CD4-positive, alpha-beta memory T cell (primary cell): ENCODE measurements at regions of chr6 and their contacts with region 1.

Region 1: DNA sequence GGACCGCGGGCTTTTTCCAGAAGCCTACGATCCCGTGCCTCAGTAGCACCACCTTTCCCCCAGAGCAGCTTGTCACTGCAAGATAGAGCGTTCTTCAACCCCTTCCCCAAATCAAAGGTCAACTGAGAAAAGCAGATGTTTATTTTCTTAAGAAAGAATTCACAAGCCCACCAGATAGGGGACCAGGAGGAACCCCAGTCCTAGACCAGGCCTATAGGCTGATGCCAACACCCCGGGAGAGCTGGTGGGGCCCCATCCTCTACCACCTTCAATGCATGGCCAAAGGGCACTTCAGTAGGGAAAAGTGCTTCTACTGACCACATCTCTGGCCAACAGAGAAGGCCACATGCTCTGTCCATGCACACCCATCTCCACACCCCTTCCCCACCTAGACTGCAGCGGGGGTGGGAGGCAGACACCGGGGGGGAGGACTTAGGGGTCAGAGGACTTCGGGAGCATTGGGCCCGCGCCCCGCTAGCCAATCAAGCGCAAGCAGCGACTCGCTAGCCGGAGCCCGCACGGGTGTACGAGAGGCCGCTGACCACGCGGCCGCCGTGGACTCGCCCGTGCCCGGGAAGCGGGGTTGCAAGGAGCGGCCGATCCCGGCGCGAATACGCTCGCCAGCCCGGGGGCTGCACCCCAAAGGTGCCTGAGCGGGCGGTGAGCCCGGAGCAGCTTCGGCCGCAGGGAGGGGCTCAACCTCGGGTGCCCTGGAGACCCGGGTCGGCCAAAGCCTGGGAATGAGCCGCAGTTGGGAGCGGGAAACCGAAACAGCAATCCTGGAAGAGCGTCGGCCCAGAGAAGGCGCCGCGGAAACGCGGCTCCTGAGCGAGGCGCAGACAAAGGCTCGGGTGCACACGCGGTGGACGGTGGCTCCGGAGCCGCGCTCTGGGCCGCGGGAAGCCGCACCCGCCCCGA is 2.8 kb downstream of the PDE10A start:
- DNase-seq: no peak
- H3K4me3 ChIP-seq: no peak overlapping the region
- H3K4me3 Mint-ChIP-seq: peak overlapping the region in 5 of 8 donors; percentile 36 to 70 (median 50)
- H3K27ac ChIP-seq: no peak overlapping the region
- H3K27ac Mint-ChIP-seq: no peak overlapping the region
- H3K4me1 ChIP-seq: no peaks in the 10 kb centered on the region
- H3K4me1 Mint-ChIP-seq: peaks cover 5 to 11% (median 9%) of the 10 kb centered on the region in 4 donors
- H3K27me3 ChIP-seq: peaks cover 2% of the 10 kb centered on the region
- H3K27me3 Mint-ChIP-seq: peaks cover 25 to 33% of the 10 kb centered on the region in 2 donors

Region 2: DNA sequence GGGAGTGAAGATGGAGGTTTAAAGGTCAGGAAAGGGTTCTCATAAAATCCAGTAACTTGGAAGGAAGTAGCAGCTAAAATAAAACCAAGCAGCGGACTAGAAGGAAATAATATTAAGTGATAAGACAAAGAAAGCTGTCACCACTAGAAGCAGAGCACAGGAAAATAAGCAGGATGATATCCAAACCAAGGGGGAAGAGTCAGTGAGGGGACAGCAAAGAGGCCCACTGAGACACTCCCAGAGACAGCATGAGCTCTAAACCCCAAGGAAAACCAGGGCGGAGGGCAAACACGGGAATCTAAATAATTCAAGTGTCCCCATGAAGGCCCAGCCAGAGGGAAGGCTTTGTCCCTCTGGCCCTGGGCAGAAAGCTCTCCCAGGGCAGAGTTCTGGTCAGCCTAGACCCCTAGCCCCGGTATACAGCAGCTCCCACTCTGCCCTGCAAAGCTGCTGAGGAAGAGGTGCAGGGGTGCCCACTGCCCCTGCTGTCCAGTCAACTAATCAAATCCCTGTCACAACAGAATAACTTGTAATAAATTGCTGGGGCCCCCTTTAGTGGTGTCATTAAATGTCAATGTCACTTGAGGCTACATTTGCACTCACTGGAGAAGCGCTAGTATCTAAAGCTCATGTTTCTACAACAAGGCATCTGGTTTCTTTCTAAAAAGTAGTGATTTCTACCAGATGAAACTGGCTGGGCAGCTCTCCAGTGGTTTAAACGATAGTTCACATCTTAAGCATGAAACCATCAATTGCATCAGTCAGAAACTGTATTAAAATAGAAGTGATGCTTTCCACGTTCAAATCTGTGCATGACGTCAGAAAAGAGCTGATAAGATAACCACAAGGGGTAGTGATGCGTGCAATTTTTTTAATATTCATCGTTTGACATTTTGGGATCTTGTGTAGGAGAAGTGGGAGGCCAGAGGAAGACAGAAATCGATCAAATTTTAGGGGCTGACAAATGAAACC is 10.8 kb before region 1 on chr6:
- CTCF ChIA-PET with region 1: no interaction called
- POLR2A ChIA-PET with region 1: no interaction called
- intact Hi-C with region 1: loop called (anchors 1 kb)
- DNase-seq: no peak
- H3K4me3 ChIP-seq: no peak overlapping the region
- H3K4me3 Mint-ChIP-seq: no peak overlapping the region
- H3K27ac ChIP-seq: no peak overlapping the region
- H3K27ac Mint-ChIP-seq: no peak overlapping the region
- H3K4me1 ChIP-seq: no peaks in the 10 kb centered on the region
- H3K4me1 Mint-ChIP-seq: no peaks in the 10 kb centered on the region
- H3K27me3 ChIP-seq: no peaks in the 10 kb centered on the region
- H3K27me3 Mint-ChIP-seq: no peaks in the 10 kb centered on the region